ENCODE measurements at regions of chr10 and their contacts with region 1.

Region 1: GRCh38 chr10:103069453-103070331 is 123.4 kb downstream of the NT5C2 start:
- DNase-seq: peak; percentile 80 to 88
- H3K4me3 ChIP-seq: no peak overlapping the region
- H3K27ac ChIP-seq: no peak overlapping the region
- H3K4me1 ChIP-seq: peaks cover 0 to 8% (median 3%) of the 10 kb centered on the region in 4 donors
- H3K27me3 ChIP-seq: no peaks in the 10 kb centered on the region
- CTCF ChIP-seq: peak in 5 of 7 experiments; percentile 29 to 69 (median 66)
- EP300 ChIP-seq: no peak
- POLR2A ChIP-seq: no peak

Region 2: DNA sequence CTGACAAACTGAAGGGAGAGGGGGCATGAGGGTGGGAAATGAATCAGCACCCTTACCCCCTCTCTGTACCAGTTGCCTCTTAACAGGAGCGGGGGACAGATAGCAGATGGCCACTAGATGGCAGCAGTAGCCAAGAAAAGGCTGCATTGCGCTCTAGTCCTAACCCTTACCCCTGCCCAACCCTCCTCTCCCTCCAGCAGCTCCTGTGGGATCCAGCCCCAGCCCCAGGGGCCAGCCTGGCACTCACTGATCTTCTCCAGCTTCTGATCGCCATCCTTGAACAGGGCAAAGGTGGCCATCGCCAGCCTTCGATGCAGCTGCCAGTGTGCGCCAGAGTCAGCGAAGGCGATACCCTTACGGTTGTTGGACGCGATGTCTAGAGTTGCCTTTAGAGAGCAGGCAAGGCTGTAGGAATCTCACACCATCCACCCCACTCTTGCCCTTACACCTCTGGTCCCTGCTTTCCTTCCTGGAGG is 234.6 kb before region 1 on chr10:
- intact Hi-C with region 1: loop called (anchors 10 kb)
- DNase-seq: peak; percentile 82 to 92
- H3K4me3 ChIP-seq: no peak overlapping the region
- H3K27ac ChIP-seq: no peak overlapping the region
- H3K4me1 ChIP-seq: peaks cover 0 to 13% (median 6%) of the 10 kb centered on the region in 4 donors
- H3K27me3 ChIP-seq: no peaks in the 10 kb centered on the region
- CTCF ChIP-seq: peak in 5 of 7 experiments; percentile 74 to 89 (median 78)
- EP300 ChIP-seq: no peak
- POLR2A ChIP-seq: no peak

Region 3: DNA sequence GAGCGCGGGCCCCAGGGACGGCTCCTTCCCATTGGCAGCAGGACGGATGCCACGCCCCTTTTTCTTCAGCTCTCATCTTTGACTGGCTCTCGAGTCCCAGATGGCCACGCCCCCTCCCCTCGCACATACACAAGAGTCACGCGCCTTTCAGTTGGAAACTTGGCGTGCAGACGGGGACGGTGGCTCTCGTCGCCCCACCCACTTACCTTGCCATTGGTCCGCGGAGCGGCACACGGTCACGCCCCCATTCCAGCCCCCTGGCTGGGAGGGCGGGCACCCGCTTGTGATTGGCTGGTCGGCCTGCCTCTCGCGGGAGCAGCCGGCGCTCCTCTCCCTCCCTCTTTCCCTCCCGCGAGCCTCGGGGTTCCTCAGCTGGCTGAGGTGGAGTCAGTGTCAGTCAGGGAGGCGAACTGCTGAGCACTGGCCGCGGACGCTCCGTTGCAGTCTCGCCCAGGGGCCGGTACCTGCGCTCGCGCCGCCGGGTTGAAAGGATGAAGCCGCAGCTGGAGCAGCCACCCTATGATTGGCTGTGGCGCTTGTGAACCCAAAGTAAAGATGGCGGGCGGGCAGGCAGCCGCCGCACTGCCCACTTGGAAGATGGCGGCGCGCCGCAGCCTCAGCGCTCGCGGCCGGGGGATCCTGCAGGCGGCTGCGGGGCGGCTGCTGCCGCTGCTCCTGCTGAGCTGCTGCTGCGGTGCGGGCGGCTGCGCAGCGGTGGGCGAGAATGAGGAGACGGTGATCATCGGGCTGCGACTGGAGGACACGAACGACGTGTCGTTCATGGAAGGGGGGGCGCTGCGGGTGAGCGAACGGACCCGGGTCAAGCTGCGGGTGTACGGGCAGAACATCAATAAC is 151.5 kb before region 1 on chr10 and contains the start of gene CNNM2:
- intact Hi-C with region 1: loop called (anchors 5 kb)
- DNase-seq: peak; percentile 100
- H3K4me3 ChIP-seq: peak within 1 kb of the TSS; percentile 79 to 98 (median 88)
- H3K27ac ChIP-seq: peak within 1 kb of the TSS; percentile 82 to 96 (median 92)
- H3K4me1 ChIP-seq: peaks cover 28 to 58% (median 48%) of the 10 kb centered on the region in 4 donors
- H3K27me3 ChIP-seq: no peaks in the 10 kb centered on the region
- CTCF ChIP-seq: peak in 1 of 7 experiments; percentile 4
- EP300 ChIP-seq: no peak
- POLR2A ChIP-seq: no peak
- total RNA-seq, gene CNNM2: 5.3 to 45.5 (median 15.2) TPM

Region 4: DNA sequence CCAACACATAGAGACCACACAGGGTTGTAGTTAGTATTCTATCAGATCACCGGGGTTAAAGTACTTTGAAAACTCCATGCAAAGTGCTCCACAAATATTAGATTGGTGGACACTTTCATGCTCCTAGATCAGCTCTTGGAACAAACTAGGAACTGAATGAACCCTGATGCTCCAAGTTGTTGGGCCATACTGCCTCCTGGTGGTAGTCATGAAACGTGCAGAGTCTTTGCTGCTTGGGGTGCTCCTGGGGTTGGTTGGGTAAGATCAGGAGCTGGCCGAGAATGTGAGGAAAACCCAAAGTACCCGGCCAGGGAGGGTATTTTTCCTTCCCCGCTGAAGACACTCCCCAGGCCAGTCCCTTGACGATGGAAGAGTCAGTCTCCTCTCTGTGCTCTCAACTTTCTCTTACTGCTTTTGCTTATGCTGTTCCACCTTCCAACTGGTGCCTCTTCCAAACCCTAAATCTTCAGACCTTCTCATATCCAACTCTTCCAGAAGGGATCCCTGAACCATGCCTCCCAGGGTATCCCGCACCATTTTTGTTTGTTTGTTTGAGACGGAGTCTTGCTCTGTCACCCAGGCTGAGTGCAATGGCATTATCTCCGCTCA is 175.1 kb after region 1 on chr10:
- intact Hi-C with region 1: loop called (anchors 5 kb)
- DNase-seq: peak; percentile 81 to 93
- H3K4me3 ChIP-seq: no peak overlapping the region
- H3K27ac ChIP-seq: no peak overlapping the region
- H3K4me1 ChIP-seq: peaks cover 17 to 36% (median 28%) of the 10 kb centered on the region in 4 donors
- H3K27me3 ChIP-seq: no peaks in the 10 kb centered on the region
- CTCF ChIP-seq: peak in 5 of 7 experiments; percentile 77 to 89 (median 87)
- EP300 ChIP-seq: no peak
- POLR2A ChIP-seq: no peak

Region 5: DNA sequence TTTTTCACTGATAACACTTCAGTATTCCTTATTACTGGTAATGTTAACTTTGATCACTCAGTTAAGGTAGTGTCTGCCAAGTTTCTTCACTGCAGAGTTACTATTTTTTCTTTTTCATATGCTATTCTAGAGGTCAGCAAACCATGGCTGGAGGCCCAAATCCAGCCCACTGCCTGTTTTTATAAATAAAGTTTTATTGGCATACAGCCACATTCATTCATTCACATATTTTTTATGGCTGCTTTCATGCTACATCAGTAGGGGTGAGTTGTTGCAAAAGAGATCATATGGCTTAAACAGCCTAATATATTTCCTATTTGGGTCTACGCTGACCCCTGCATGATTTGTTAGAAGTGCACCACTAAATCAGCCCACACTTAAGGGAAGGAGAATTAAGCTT is 186.9 kb after region 1 on chr10:
- intact Hi-C with region 1: no loop called
- DNase-seq: no peak
- H3K4me3 ChIP-seq: no peak overlapping the region
- H3K27ac ChIP-seq: no peak overlapping the region
- H3K4me1 ChIP-seq: no peaks in the 10 kb centered on the region
- H3K27me3 ChIP-seq: no peaks in the 10 kb centered on the region
- CTCF ChIP-seq: no peak
- EP300 ChIP-seq: no peak
- POLR2A ChIP-seq: no peak

Measured in stomach (tissue), 19 donors.